ENCODE measurements at regions of chr11 and their contacts with region 1.

Region 1: DNA sequence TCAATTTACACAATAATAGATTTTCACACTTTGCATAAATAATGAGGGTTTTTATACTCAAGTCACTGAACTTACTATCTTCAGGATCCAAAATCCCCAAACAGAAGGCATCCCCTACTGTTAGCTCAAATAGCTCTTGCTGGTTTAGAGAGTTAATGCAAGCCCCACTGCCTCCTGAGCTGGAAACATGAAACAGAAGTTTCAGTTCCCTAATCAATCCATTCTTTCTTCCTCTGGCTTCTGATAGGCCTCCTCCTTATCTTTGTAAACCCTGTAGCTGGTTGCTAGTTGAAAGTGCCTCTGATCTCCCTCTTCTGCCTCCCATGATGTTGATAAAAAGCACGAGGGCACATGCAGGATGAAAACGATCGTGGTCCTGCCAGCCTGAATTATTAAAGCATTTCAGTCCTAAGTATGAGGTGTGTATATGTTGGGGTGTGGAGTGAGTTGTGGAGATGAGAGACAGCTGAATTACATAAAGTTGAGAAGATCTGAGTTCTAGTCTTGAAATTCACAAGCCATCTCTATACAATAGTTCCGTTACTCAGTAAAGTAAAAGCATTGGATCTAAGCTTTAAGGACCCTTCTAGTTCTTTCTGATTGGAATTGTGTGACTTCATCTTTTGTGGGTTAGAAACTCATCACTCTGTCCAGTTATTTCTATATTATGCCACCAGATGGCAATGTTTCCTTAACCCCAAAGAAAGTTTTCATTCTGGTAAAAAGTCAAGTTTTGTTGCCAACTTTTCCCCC is 35.0 kb upstream of the EHF start:
- DNase-seq: peak; percentile 50
- CTCF ChIP-seq: peak; percentile 48

Region 2: DNA sequence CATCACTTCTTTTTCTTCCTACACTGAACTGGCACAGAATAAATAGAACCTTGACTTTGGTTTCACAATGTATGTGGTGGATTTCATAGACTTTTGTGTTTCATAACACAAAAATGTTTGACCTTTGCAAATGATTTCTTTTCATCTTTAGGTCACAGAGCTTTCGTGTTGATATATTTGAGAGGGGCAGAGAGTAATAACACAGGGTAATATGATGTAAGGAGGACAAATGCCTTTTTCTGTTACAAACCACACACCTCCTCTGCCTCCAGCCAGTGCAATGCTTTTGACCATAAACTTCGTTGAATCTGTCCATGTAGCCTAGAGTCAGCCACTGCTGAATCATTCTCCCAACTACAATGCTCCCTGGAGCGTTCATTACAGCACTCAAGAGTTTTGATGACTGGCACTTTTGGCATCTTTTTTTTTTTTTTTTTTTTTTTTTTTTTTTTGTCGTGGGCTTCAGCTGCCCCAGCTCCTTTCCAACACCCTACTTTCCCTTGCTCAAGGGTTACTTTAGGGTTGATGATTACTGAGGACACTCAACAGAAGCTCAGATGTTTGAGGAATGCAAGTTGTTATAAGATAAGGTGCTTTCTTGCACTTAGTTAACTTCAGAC is 158.6 kb before region 1 on chr11:
- CTCF ChIA-PET with region 1: no interaction called
- POLR2A ChIA-PET with region 1: no interaction called
- DNase-seq: no peak
- CTCF ChIP-seq: no peak

Region 3: DNA sequence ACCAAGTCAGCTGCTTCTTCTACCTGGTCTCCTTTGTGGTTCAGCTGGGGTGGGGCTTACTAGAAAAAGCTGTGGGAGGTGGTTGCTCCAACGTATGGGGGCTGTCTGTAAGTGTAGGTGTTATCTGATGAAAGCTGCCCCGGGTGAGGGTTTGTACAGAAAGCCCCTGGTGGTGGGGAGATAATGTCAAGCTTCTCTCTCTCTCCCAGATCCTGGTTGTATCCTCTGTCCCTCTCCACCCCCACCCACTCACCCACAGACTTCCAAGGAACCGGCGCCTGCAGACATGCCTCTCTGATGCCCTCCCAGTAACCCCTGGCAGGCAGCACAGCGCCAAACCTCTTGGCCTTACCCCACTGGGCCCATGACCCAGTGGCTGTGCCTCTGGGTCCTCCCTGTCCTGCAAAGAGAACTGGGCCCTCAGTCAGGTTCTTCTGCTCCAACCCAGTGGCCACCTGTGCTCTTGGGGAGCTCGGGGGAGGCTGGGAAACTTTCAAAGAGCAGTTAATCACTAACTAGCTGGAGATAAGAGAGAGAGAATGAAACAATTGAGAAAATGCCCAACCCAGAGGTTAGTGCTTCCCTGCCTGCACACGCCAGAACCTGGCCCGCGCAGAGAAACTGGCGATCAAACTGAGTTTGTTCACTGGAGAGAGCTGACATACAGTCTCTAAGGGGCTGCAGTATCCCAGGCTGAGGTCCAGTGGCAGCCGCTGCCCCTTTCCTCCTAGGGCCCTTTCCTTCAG is 14.6 kb after region 1 on chr11:
- CTCF ChIA-PET with region 1: interaction called, 36 read pairs
- POLR2A ChIA-PET with region 1: no interaction called
- DNase-seq: no peak
- CTCF ChIP-seq: no peak

Region 4: DNA sequence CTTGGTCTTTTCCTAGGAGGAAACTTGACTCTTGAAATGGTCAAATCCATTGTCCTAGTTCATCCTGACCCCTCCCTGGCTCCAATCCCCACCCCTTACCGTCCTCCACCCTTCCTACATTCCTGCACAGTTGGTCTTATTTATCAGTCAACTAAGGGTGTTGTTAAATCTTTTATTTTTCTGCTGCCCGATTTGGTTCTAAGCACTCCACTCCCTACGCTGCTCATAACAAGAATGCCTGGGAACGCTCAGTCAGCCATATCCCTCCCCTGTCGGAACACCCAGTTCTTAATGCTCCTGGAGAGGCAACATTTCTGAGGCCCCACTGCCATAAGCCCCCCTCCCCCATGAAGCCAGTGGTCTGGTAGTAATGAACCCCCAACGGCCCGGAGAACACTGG is 44.6 kb after region 1 on chr11:
- CTCF ChIA-PET with region 1: interaction called, 13 read pairs
- POLR2A ChIA-PET with region 1: no interaction called
- DNase-seq: no peak
- CTCF ChIP-seq: no peak

Region 5: DNA sequence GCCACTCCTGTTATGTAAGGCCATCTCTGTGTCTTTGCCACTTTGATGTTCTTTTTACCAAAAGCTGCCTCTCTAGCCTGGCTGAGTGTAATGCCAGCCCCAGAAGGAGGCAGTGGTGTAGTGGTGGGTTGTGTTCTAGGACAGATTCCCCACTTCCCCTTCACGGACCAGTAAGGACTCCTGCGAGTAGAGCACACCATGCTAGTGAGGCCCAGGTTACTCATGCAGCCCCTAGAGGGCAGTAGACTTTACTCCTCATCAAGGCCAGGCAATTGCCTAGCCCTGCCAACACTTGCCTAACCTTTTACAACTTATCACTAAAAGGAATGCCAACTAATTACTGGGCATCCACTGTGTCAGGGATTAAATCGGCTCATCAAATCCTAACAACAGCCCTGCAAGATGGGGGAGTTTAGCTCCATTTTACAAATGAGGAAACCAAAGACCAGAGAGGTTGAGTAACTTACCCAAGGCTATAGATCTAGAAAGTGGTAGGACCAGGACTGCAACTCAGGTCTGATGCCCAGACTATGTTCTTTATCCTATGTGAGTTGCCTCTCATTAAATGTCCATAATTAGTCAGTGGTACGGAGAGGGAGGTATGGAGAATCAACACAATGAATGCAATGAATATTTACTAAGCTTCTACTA is 254.9 kb after region 1 on chr11:
- CTCF ChIA-PET with region 1: interaction called, 14 read pairs
- POLR2A ChIA-PET with region 1: no interaction called
- DNase-seq: peak; percentile 52
- CTCF ChIP-seq: peak; percentile 53

Region 6: GRCh38 chr11:35391922-35392813 is 806.3 kb after region 1 on chr11:
- CTCF ChIA-PET with region 1: interaction called, 24 read pairs
- POLR2A ChIA-PET with region 1: no interaction called
- DNase-seq: peak; percentile 75
- CTCF ChIP-seq: peak; percentile 91